Left ventricle myocardium inferior (tissue), 1 donor: ENCODE measurements at regions of chr7 and their contacts with region 1.

Region 1: GRCh38 chr7:129218514-129219062 is 6.2 kb upstream of the AHCYL2 start:
- DNase-seq: peak; percentile 83
- H3K4me3 ChIP-seq: no peak overlapping the region
- H3K27ac ChIP-seq: no peak overlapping the region
- H3K4me1 ChIP-seq: peaks cover 3% of the 10 kb centered on the region
- H3K27me3 ChIP-seq: peaks cover 9% of the 10 kb centered on the region
- CTCF ChIP-seq: peak; percentile 92

Region 2: DNA sequence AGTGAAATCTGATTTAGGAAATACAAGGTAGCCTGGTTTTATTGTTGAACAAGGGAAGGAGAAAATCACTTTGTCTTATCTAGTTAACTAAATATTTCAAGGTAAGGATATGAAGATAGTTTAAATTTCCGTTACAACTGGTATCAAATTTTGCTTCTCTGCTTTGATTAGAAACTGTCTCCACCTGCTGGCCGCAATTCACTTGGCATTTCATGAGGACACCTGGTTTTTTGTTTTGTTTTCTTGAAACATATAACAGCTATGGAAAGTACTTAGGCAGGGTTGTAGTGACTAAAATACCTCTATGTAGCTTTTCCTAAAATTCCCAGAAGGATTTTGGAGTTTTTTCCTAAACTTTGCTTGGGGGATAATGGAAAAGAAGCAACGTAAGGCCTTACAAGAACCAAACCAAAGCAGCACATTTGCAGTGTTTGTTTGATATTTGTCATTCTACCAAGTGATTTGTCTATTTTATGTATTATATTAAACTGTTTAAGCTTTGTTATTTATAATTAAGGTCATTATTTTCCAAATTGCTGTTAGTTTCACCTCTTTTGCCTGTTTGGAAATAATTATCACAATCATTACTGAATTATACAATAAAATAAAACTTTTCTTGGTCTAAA is 79.8 kb after region 1 on chr7:
- intact Hi-C with region 1: loop called (anchors 5 kb)
- DNase-seq: no peak
- H3K4me3 ChIP-seq: no peak overlapping the region
- H3K27ac ChIP-seq: no peak overlapping the region
- H3K4me1 ChIP-seq: peaks cover 5% of the 10 kb centered on the region
- H3K27me3 ChIP-seq: no peaks in the 10 kb centered on the region
- CTCF ChIP-seq: peak; percentile 76

Region 3: GRCh38 chr7:129471402-129471827 is 252.8 kb after region 1 on chr7:
- intact Hi-C with region 1: loop called (anchors 10 kb)
- DNase-seq: no peak
- H3K4me3 ChIP-seq: no peak overlapping the region
- H3K27ac ChIP-seq: no peak overlapping the region
- H3K4me1 ChIP-seq: peaks cover 10% of the 10 kb centered on the region
- H3K27me3 ChIP-seq: no peaks in the 10 kb centered on the region
- CTCF ChIP-seq: no peak